Heart left ventricle (tissue), 16 donors: ENCODE measurements at regions of chr22 and their contacts with region 1.

Region 1: DNA sequence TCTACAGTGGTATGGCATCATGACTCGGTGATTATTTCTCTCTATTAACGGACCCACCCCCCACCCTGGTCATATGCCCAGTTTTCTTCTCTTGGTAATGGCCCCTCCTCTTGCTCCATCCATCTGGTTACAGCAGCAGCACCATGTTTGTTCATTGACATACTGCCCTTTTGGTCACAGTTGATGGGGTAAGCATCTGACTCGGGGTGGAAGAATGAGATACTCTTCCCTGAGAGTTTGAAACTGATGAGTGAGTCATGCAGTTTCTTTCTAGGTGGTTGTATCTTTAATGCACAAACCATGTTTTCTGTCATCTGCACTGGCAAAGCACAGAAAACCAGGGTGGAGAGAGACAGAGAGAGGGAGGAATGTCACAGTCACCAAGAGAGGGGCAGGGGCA is 126.0 kb downstream of the SYN3 start:
- DNase-seq: no peak
- ATAC-seq: no peak
- H3K4me3 ChIP-seq: no peak overlapping the region
- H3K27ac ChIP-seq: no peak overlapping the region
- H3K4me1 ChIP-seq: no peaks in the 10 kb centered on the region
- H3K27me3 ChIP-seq: no peaks in the 10 kb centered on the region
- CTCF ChIP-seq: no peak
- POLR2A ChIP-seq: no peak

Region 2: DNA sequence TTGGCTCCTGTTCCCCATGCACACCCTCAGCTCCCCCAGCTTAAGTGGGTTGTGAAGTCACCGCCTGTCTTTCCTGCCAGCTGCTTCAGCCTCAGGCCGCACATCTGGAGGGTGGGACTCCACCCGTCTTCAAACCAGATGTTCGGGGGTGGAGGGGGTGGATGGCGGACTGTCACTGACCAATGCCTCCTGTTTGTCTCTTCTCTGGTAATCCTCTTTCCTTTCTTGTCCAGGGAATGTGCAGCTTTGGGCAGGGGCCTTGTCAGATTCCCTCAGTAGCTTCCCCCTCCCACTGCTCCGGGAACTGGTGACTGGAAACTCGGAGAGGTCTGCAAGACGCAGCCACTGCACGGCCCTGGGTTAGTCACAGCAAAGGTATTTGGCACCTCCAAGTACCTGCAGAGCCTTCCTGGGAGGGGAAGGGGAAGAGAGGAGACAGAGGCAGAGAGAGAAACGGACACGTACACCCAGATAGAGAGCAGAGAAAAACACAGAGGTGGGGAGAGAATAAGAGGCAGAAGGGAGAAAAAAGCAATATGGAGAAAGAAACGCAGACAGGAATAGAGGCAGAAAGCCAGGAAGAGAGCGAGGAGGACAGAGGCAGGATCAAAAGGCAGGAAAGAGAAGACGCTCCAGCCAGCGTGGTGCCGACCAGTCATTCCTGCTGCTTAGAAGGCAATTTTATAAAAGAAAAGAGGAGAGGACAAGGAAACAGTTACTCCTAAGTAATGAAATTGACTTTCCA is 186.8 kb before region 1 on chr22:
- intact Hi-C with region 1: no loop called
- DNase-seq: peak; percentile 47 to 83 (median 78)
- ATAC-seq: peak; percentile 69 to 90 (median 83)
- H3K4me3 ChIP-seq: peak overlapping the region in 1 of 12 donors; percentile 16
- H3K27ac ChIP-seq: peak overlapping the region in 10 of 12 donors; percentile 1 to 80 (median 51)
- H3K4me1 ChIP-seq: peaks cover 0 to 44% (median 21%) of the 10 kb centered on the region in 12 donors
- H3K27me3 ChIP-seq: no peaks in the 10 kb centered on the region
- CTCF ChIP-seq: no peak
- POLR2A ChIP-seq: no peak

Region 3: GRCh38 chr22:32796865-32797573 is 135.2 kb before region 1 on chr22:
- intact Hi-C with region 1: no loop called
- DNase-seq: peak; percentile 77 to 87 (median 84)
- ATAC-seq: peak; percentile 28 to 74 (median 66)
- H3K4me3 ChIP-seq: no peak overlapping the region
- H3K27ac ChIP-seq: peak overlapping the region in 6 of 12 donors; percentile 11 to 51 (median 29)
- H3K4me1 ChIP-seq: peaks cover 0 to 37% (median 13%) of the 10 kb centered on the region in 12 donors
- H3K27me3 ChIP-seq: peaks cover 0 to 13% (median 0%) of the 10 kb centered on the region in 9 donors
- CTCF ChIP-seq: peak; percentile 82 to 93 (median 91)
- POLR2A ChIP-seq: no peak

Region 4: GRCh38 chr22:32979606-32980005 is 47.4 kb after region 1 on chr22:
- intact Hi-C with region 1: loop called in 4 of 10 experiments (anchors 2 to 10 kb)
- DNase-seq: no peak
- ATAC-seq: no peak
- H3K4me3 ChIP-seq: no peak overlapping the region
- H3K27ac ChIP-seq: no peak overlapping the region
- H3K4me1 ChIP-seq: no peaks in the 10 kb centered on the region
- H3K27me3 ChIP-seq: no peaks in the 10 kb centered on the region
- CTCF ChIP-seq: no peak
- POLR2A ChIP-seq: no peak